AG04450 (cell line): ENCODE measurements at regions of chr3 and their contacts with region 1.

Region 1: GRCh38 chr3:159252772-159253384 is 451.0 kb downstream of the MFSD1 start:
- DNase-seq: no peak
- H3K4me3 ChIP-seq: no peak overlapping the region
- H3K27ac ChIP-seq: no peak overlapping the region
- H3K27me3 ChIP-seq: no peaks in the 10 kb centered on the region
- CTCF ChIP-seq: peak; percentile 68

Region 2: DNA sequence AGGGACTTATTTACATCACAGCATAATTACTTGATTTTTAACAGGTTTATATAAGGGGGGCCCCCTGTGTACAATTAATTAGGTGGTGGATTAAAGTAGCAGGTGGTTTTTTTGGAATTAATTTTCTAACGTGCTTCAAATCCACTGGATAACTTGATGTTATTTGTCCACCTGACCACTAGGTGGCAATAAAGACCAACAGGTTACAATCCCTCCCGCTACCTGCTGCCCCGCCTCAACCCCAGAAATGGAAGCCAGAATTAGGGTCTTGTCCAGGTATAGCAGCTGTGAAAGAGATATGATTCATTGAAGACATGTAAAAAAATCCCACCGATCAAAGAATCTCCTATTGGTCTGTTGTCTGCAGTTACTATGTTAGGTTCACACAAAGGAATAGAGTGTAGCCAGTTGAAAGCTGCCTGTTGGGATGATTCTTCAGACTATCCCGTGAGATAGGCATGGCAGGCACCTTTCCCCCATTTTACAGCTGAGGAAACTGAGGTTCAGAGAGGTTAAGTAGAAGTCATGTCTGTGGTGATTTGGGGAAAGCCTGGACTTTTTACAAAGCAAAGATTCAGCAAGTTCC is 407.0 kb before region 1 on chr3:
- CTCF ChIA-PET with region 1: interaction called, 153 read pairs
- POLR2A ChIA-PET with region 1: interaction called, 3 read pairs
- DNase-seq: no peak
- H3K4me3 ChIP-seq: no peak overlapping the region
- H3K27ac ChIP-seq: no peak overlapping the region
- H3K27me3 ChIP-seq: no peaks in the 10 kb centered on the region
- CTCF ChIP-seq: peak; percentile 72

Region 3: DNA sequence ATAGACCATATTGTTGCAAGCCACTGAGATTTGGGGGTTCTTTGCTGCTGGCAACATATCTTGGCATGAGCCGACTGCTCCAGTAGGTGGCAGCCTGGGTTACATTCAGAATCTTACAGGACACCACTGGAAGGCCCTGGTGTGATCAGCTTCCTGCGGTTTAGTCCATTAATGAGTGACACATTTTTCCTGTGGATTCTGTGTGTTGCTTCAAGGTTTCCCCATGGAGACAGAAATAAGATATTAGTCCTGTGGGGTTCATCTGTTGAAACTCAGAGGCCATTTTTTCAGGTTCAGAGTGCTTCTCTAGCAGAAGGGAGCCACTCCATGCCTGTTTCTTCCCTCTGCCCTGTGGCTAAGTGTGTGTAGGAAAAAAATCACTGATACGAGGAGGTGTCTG is 334.9 kb before region 1 on chr3:
- CTCF ChIA-PET with region 1: interaction called, 31 read pairs
- POLR2A ChIA-PET with region 1: no interaction called
- DNase-seq: no peak
- H3K4me3 ChIP-seq: no peak overlapping the region
- H3K27ac ChIP-seq: no peak overlapping the region
- H3K27me3 ChIP-seq: no peaks in the 10 kb centered on the region
- CTCF ChIP-seq: peak; percentile 76